ENCODE measurements at regions of chr1 and their contacts with region 1.

Region 1: DNA sequence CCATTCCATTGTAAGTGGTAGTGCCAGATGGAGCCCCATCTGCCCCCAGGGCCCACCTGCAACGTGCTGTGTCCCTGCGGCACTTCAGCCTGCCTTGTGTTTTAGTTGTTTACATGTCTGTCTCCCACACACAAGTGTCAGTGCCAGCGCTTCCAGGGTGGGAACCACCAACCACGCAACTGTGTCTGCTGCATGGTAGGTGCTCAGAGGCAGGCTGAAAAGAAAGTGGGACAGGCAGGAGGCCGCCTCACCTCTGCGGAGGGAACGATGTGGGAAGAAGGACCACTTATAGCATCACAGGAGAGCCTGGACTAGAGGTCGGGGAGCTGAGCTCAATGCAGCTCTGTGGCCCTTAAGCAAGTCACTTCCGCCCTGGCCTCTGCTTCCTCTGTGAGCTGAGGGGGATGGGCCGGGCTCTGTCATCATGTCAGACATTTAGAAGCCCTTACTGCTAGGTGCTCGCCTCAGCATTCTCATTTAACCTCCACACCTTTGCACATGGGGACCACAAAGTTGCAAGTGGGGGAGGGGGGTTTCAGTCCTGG is 17.9 kb downstream of the SLC9A1 start:
- DNase-seq: peak; percentile 83 to 90 (median 87)
- H3K4me3 ChIP-seq: peak overlapping the region in 2 of 3 experiments; percentile 10 to 61
- H3K4me3 Mint-ChIP-seq: peak overlapping the region; percentile 70 to 91
- H3K27ac ChIP-seq: peak overlapping the region; percentile 97 to 99
- H3K27ac Mint-ChIP-seq: peak overlapping the region; percentile 99 to 100 (median 99)
- H3K4me1 ChIP-seq: peaks cover 78 to 80% of the 10 kb centered on the region in 2 donors
- H3K4me1 Mint-ChIP-seq: peaks cover 88% of the 10 kb centered on the region
- H3K27me3 ChIP-seq: no peaks in the 10 kb centered on the region
- H3K27me3 Mint-ChIP-seq: peaks cover 0 to 2% (median 0%) of the 10 kb centered on the region in 3 donors
- CTCF ChIP-seq: no peak

Region 2: GRCh38 chr1:27111626-27112573 is 25.2 kb before region 1 on chr1:
- intact Hi-C with region 1: loop called in 1 of 2 experiments (anchors 2 kb)
- DNase-seq: peak; percentile 99 to 100 (median 100)
- H3K4me3 ChIP-seq: no peak overlapping the region
- H3K4me3 Mint-ChIP-seq: peak overlapping the region in 1 of 2 donors; percentile 53
- H3K27ac ChIP-seq: peak overlapping the region; percentile 95 to 98
- H3K27ac Mint-ChIP-seq: peak overlapping the region; percentile 98 to 100 (median 100)
- H3K4me1 ChIP-seq: peaks cover 65 to 70% of the 10 kb centered on the region in 2 donors
- H3K4me1 Mint-ChIP-seq: peaks cover 68% of the 10 kb centered on the region
- H3K27me3 ChIP-seq: no peaks in the 10 kb centered on the region
- H3K27me3 Mint-ChIP-seq: no peaks in the 10 kb centered on the region
- CTCF ChIP-seq: peak; percentile 61